ENCODE measurements at regions of chr20 and their contacts with region 1.

Region 1: GRCh38 chr20:47233333-47234188 is 122.9 kb downstream of the ZMYND8 start:
- DNase-seq: no peak
- H3K4me3 ChIP-seq: no peak overlapping the region
- H3K27ac ChIP-seq: no peak overlapping the region
- H3K4me1 ChIP-seq: no peaks in the 10 kb centered on the region
- H3K27me3 ChIP-seq: no peaks in the 10 kb centered on the region
- CTCF ChIP-seq: no peak

Region 2: DNA sequence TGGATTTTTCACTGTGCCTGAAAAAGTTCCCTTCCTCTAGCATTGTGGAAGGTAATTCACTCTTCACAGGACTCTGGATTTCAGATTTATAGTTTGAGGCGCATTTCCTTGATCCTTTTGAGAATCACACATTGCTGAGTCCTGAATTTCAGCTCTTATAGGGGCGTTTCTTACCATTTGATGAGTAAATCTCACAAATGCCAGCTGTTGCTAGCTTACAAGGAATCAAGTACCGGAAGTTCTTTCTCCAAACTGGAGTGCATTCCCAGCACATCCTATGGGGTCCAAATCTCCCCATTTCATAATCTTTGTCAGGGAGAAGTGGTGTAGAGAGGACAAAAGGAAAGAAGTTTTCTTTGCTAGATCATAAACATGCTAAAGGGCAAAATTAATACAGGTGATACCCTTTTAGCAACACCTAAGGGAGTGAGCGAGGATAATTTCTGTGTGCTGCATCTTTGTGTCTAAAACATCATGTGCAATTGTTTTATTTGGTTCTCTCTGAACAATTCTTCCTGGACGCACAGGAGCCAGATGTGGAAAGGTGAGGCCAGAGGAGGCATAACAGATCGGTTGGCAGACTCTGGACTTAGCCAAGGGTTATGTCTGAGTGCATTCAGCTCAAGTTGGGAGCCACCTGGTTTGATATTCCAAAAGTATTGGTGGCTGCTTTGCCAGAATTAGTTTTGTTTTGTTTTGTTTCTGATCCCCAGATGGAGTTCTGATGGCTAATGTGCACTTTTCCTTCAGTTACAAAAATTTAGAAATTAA is 376.3 kb before region 1 on chr20:
- CTCF ChIA-PET with region 1: interaction called, 12 read pairs
- POLR2A ChIA-PET with region 1: no interaction called
- intact Hi-C with region 1: no loop called
- DNase-seq: no peak
- H3K4me3 ChIP-seq: no peak overlapping the region
- H3K27ac ChIP-seq: no peak overlapping the region
- H3K4me1 ChIP-seq: no peaks in the 10 kb centered on the region
- H3K27me3 ChIP-seq: no peaks in the 10 kb centered on the region
- CTCF ChIP-seq: no peak

Region 3: DNA sequence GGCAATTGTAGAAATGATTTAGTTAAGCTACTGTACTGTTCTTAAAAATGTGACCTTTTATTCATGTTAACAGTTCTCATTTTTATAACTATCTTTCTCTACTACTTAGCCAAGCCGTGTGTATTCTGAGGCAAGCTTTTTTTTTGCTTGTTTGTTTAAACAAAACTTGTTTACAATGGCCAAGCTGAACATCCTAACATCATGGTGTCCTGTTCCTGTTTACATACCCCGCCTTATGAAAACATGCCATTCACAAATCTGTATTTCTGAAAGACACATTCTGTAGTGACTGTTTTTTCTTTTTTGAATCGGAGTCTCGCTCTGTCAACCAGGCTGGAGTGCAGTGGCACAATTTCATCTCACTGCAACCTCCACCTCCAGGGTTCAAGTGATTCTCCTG is 409.1 kb after region 1 on chr20:
- CTCF ChIA-PET with region 1: no interaction called
- POLR2A ChIA-PET with region 1: interaction called, 12 read pairs
- intact Hi-C with region 1: no loop called
- DNase-seq: no peak
- H3K4me3 ChIP-seq: no peak overlapping the region
- H3K27ac ChIP-seq: no peak overlapping the region
- H3K4me1 ChIP-seq: no peaks in the 10 kb centered on the region
- H3K27me3 ChIP-seq: no peaks in the 10 kb centered on the region
- CTCF ChIP-seq: no peak

Region 4: GRCh38 chr20:47957135-47958017 is 723.8 kb after region 1 on chr20:
- CTCF ChIA-PET with region 1: no interaction called
- POLR2A ChIA-PET with region 1: interaction called, 10 read pairs
- intact Hi-C with region 1: no loop called
- DNase-seq: no peak
- H3K4me3 ChIP-seq: no peak overlapping the region
- H3K27ac ChIP-seq: no peak overlapping the region
- H3K4me1 ChIP-seq: peaks cover 22% of the 10 kb centered on the region
- H3K27me3 ChIP-seq: no peaks in the 10 kb centered on the region
- CTCF ChIP-seq: no peak